ENCODE measurements at regions of chr9 and their contacts with region 1.

Region 1: DNA sequence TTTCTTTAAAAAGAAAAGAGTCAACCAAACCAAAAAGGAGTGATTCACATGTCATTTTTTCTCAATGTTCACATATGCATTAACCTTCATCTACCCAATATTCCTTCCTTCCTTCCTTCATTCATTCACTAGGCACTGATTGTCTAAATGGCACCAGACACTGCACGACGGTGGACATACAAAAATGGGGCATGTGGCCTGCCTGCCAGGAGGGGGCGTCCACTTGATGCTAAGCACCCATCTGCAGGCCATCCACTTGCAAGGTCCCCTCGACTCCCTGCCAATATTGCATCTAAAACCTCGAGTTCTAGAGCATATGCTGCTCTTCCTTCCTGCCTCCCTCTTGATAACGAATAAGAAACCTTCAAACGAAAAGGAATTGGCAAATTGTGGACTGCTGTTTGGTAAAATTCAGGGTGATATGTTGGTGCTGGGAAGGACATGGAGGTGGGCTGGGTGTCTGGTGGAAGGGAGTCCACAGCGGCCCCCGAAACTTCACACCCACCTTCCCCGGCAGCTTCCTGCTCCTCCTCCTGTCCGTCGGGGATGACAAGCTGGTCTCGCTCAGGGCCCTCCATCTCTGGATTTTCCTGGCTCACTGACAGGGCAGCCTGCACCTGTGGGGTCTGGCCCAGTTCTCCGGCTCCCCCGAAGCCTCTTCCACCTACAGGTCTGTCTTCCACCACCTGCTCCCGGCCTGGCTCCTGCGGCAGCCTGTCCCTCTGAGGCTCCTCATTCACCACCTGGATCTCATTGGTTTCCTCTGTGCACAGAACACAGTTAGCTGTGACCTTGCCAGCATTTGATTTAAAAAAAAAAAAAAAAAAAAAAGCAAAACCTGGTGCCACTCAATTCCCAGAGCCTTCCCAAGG is 64.3 kb downstream of the GOLM1 start:
- DNase-seq: peak; percentile 50 to 78
- H3K4me3 ChIP-seq: no peak overlapping the region
- H3K4me1 ChIP-seq: no peaks in the 10 kb centered on the region
- H3K27me3 ChIP-seq: no peaks in the 10 kb centered on the region

Region 2: DNA sequence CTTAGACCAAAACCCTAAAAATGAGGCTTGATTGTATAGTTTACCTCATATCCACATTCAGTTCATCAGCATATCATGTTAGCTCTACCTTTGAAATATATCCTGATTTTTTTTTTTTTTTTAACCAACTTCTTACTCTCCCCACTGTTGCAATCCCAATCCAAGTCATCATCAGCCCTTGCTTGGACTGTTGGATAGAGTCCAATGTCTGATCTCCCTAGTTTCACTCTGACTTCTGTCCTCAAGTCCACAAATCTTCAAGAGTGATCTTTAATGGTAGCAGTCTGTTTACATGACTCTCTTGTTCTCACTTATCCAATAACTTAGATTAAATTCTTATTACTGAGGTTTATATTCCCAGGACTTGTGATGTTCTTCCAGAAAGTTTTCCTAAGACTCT is 63.4 kb before region 1 on chr9:
- in situ Hi-C with region 1: no loop called
- DNase-seq: no peak
- H3K4me3 ChIP-seq: no peak overlapping the region
- H3K4me1 ChIP-seq: peaks cover 5% of the 10 kb centered on the region
- H3K27me3 ChIP-seq: no peaks in the 10 kb centered on the region

Region 3: DNA sequence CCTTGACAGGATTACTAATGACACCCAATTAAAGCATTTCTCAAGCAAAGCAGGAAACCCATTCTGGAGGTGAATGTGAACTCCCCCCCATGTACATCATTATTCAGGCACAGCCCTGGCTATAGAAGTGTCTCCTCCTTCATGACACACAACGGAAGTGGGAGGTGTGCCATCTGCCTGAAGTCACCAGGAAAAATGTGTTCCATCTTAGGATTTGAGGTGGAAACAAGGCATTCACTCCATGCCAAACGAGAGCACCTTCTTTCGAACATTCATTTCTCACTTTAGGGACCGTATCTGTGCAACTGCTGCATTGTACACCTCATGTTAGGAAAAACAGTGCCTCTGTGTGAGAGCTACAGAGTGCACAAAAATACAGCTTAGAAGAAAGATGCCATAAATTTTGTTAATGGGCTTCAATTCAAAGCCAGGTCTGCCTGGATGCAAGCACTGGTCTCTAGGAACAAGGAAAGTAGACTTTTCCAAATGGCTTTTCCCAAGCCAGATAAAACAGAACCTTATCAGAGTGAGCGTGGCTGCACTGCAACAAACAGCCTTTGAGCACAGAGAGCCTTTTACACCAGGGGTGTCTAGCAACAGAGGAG is 44.9 kb after region 1 on chr9:
- in situ Hi-C with region 1: no loop called
- DNase-seq: no peak
- H3K4me3 ChIP-seq: no peak overlapping the region
- H3K4me1 ChIP-seq: no peaks in the 10 kb centered on the region
- H3K27me3 ChIP-seq: no peaks in the 10 kb centered on the region

Region 4: GRCh38 chr9:86098824-86099700 is 64.0 kb after region 1 on chr9 and contains the start of gene GOLM1:
- in situ Hi-C with region 1: loop called (anchors 10 kb)
- DNase-seq: peak; percentile 47 to 69
- H3K4me3 ChIP-seq: peak within 1 kb of the TSS; percentile 62
- H3K4me1 ChIP-seq: peaks cover 28% of the 10 kb centered on the region
- H3K27me3 ChIP-seq: no peaks in the 10 kb centered on the region

Region 5: DNA sequence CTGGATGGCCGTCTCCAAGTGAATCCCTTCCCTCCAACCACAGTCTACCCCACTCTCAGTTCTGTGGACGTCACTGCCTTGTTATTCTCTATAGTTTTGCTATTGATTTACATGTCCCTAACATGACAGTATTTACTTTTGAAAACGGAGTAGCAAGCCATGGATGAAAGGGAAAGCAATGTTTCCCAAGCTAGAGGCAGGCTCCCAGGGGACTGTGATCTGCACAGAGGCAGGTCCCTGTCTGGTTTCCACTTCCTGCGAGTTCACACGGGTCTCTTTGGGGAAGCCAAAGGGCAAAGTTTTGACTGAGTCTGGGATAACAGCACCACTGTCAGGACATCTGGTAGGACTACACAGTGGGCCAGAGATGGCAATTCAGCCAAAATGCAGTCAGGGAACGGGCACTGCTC is 211.7 kb after region 1 on chr9:
- in situ Hi-C with region 1: loop called (anchors 25 kb)
- DNase-seq: peak in 1 of 2 experiments; percentile 81
- H3K4me3 ChIP-seq: peak overlapping the region; percentile 4; the same call in 1 of the 2 replicates
- H3K4me1 ChIP-seq: peaks cover 15% of the 10 kb centered on the region
- H3K27me3 ChIP-seq: no peaks in the 10 kb centered on the region

Measured in HAP-1 (cell line).